ENCODE measurements at regions of chr10 and their contacts with region 1.

Region 1: GRCh38 chr10:101782811-101783735 is at the start of gene NPM3:
- DNase-seq: no peak
- ATAC-seq: peak; percentile 76
- H3K4me3 ChIP-seq: peak within 1 kb of the TSS; percentile 85
- H3K27ac ChIP-seq: peak within 1 kb of the TSS; percentile 71
- H3K4me1 ChIP-seq: peaks cover 41% of the 10 kb centered on the region
- H3K27me3 ChIP-seq: no peaks in the 10 kb centered on the region
- CTCF ChIP-seq: no peak
- EP300 ChIP-seq: no peak
- POLR2A ChIP-seq: peak; percentile 76
- RAD21 ChIP-seq: no peak
- polyA plus RNA-seq, gene NPM3: 19.7 to 49.6 TPM

Region 2: DNA sequence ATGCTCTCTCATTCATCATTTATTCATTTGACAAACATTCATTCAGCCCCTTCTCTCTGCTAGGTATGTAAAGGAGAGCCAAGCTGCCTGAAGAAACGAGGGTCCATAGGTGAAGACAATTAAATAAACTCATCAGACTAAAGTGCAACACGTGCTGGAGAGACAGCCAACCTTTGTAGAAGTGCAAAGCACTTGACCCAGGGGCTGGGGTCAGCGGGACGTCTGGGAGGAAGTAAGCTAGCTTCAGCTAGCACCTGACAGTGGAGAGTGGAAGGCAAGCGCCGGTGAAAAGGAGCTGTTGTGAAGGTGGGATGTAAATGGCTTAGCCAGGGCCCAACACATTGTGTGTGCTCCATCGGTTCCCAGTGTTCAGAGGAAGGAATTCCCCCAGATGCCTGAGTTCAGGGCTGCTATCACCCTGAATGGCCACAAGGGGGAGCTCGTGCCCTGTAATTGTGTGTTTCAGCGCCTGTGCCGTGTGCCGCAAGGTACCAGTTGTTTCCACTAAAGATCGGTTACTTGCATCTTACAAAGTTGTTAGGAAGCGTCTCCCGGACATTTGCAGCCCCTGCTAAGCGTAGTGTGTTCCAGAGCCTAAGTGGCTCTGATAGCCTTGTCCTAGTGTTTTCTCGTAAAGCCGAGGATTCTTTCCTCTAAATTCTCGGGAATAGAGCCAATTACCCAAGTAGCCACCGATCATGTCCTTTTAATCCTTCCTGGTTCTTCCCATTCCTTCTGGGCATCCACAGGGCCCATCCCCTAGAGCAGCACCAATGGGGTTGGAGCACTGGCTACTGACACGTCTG is 621.4 kb before region 1 on chr10:
- CTCF ChIA-PET with region 1: no interaction called
- POLR2A ChIA-PET with region 1: no interaction called
- RAD21 ChIA-PET with region 1: no interaction called
- SMC1A ChIA-PET with region 1: no interaction called
- in situ Hi-C with region 1: no loop called
- intact Hi-C with region 1: loop called (anchors 1 kb)
- DNase-seq: peak; percentile 12
- ATAC-seq: peak; percentile 96
- H3K4me3 ChIP-seq: no peak overlapping the region
- H3K27ac ChIP-seq: no peak overlapping the region
- H3K4me1 ChIP-seq: peaks cover 6% of the 10 kb centered on the region
- H3K27me3 ChIP-seq: peaks cover 1 to 2% of the 10 kb centered on the region in 2 experiments; a peak in 3 of 4 replicates
- CTCF ChIP-seq: peak; percentile 94 to 97 (median 95); a peak in 5 of 6 replicates
- EP300 ChIP-seq: no peak
- POLR2A ChIP-seq: no peak
- RAD21 ChIP-seq: peak; percentile 70

Region 3: GRCh38 chr10:101536800-101537199 is 246.3 kb before region 1 on chr10:
- CTCF ChIA-PET with region 1: interaction called, 12 read pairs
- POLR2A ChIA-PET with region 1: no interaction called
- RAD21 ChIA-PET with region 1: no interaction called
- SMC1A ChIA-PET with region 1: interaction called, 3 read pairs
- in situ Hi-C with region 1: no loop called
- intact Hi-C with region 1: no loop called
- DNase-seq: no peak
- ATAC-seq: peak; percentile 72
- H3K4me3 ChIP-seq: no peak overlapping the region
- H3K27ac ChIP-seq: no peak overlapping the region
- H3K4me1 ChIP-seq: 0 out of 2 replicates have a peak, but pooled peaks cover 3% of the 10 kb centered on the region
- H3K27me3 ChIP-seq: no peaks in the 10 kb centered on the region
- CTCF ChIP-seq: peak; percentile 38 to 52 (median 48); a peak in 5 of 6 replicates
- EP300 ChIP-seq: no peak
- POLR2A ChIP-seq: no peak
- RAD21 ChIP-seq: 0 out of 2 replicates have a peak, but pooled peaks have one; percentile 32

Region 4: GRCh38 chr10:101595591-101596433 is 187.3 kb before region 1 on chr10:
- CTCF ChIA-PET with region 1: interaction called, 334 read pairs
- POLR2A ChIA-PET with region 1: interaction called, 3 read pairs
- RAD21 ChIA-PET with region 1: interaction called, 172 read pairs
- SMC1A ChIA-PET with region 1: interaction called, 139 read pairs
- in situ Hi-C with region 1: no loop called
- intact Hi-C with region 1: no loop called
- DNase-seq: no peak
- ATAC-seq: no peak
- H3K4me3 ChIP-seq: no peak overlapping the region
- H3K27ac ChIP-seq: no peak overlapping the region
- H3K4me1 ChIP-seq: no peaks in the 10 kb centered on the region
- H3K27me3 ChIP-seq: no peaks in the 10 kb centered on the region
- CTCF ChIP-seq: no peak
- EP300 ChIP-seq: no peak
- POLR2A ChIP-seq: no peak
- RAD21 ChIP-seq: no peak

Region 5: GRCh38 chr10:101617102-101617823 is 165.8 kb before region 1 on chr10:
- CTCF ChIA-PET with region 1: interaction called, 11 read pairs
- POLR2A ChIA-PET with region 1: no interaction called
- RAD21 ChIA-PET with region 1: interaction called, 8 read pairs
- SMC1A ChIA-PET with region 1: interaction called, 5 read pairs
- in situ Hi-C with region 1: no loop called
- intact Hi-C with region 1: no loop called
- DNase-seq: peak; percentile 33
- ATAC-seq: peak; percentile 83
- H3K4me3 ChIP-seq: no peak overlapping the region
- H3K27ac ChIP-seq: peak overlapping the region; percentile 62
- H3K4me1 ChIP-seq: peaks cover 19% of the 10 kb centered on the region
- H3K27me3 ChIP-seq: no peaks in the 10 kb centered on the region
- CTCF ChIP-seq: peak; percentile 0 to 22 (median 16); a peak in 1 of 6 replicates
- EP300 ChIP-seq: peak; percentile 46 to 50; a peak in 2 of 4 replicates
- POLR2A ChIP-seq: 0 out of 2 replicates have a peak, but pooled peaks have one; percentile 6
- RAD21 ChIP-seq: no peak

Region 6: DNA sequence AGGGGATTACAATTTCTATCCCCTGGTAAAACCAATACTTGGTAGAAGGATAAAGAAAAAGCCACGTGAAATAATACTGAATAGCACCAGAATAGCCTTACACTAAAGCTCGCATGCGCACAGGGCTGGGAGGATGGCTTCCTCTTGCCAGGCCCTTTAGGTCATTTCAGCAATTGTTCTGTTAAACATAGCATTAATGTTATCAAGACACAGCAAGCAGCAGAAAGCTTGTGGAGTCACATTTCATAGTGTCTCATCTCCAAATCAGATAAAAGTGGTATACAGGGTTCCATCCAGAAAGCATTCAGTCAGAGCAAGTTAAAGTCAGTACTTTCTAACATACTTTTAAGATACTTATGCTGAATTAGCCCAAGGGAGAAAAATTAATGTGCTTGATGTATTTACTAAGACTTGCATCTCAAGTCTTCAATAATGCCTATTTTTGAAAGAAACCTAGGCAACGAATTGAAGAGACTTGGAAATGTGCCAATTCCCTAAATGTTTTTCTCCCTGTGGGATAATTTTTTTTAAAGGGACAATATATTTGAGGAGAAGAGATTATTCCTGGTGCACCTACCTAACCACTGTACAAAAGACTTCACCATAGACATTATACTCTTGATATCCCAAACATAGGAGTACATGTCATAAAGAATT is 14.5 kb after region 1 on chr10:
- CTCF ChIA-PET with region 1: interaction called, 14 read pairs
- POLR2A ChIA-PET with region 1: interaction called, 17 read pairs
- RAD21 ChIA-PET with region 1: interaction called, 4 read pairs
- SMC1A ChIA-PET with region 1: interaction called, 7 read pairs
- in situ Hi-C with region 1: no loop called
- intact Hi-C with region 1: no loop called
- DNase-seq: no peak
- ATAC-seq: no peak
- H3K4me3 ChIP-seq: no peak overlapping the region
- H3K27ac ChIP-seq: no peak overlapping the region
- H3K4me1 ChIP-seq: no peaks in the 10 kb centered on the region
- H3K27me3 ChIP-seq: no peaks in the 10 kb centered on the region
- CTCF ChIP-seq: no peak
- EP300 ChIP-seq: no peak
- POLR2A ChIP-seq: no peak
- RAD21 ChIP-seq: no peak

Region 7: GRCh38 chr10:102072673-102073527 is 289.8 kb after region 1 on chr10:
- CTCF ChIA-PET with region 1: interaction called, 10 read pairs
- POLR2A ChIA-PET with region 1: no interaction called
- RAD21 ChIA-PET with region 1: interaction called, 3 read pairs
- SMC1A ChIA-PET with region 1: interaction called, 7 read pairs
- in situ Hi-C with region 1: no loop called
- intact Hi-C with region 1: loop called (anchors 2 kb)
- DNase-seq: no peak
- ATAC-seq: peak; percentile 99
- H3K4me3 ChIP-seq: no peak overlapping the region
- H3K27ac ChIP-seq: no peak overlapping the region
- H3K4me1 ChIP-seq: no peaks in the 10 kb centered on the region
- H3K27me3 ChIP-seq: no peaks in the 10 kb centered on the region
- CTCF ChIP-seq: peak; percentile 94 to 96 (median 95)
- EP300 ChIP-seq: no peak
- POLR2A ChIP-seq: no peak
- RAD21 ChIP-seq: peak; percentile 92